ENCODE measurements at regions of chr1 and their contacts with region 1.

Region 1: GRCh38 chr1:182677397-182678098 is 6.8 kb downstream of the RGS8 start:
- DNase-seq: no peak
- H3K4me3 Mint-ChIP-seq: no peak overlapping the region
- H3K27ac Mint-ChIP-seq: no peak overlapping the region
- H3K4me1 Mint-ChIP-seq: no peaks in the 10 kb centered on the region
- H3K27me3 Mint-ChIP-seq: peaks cover 49% of the 10 kb centered on the region
- CTCF ChIP-seq: no peak

Region 2: DNA sequence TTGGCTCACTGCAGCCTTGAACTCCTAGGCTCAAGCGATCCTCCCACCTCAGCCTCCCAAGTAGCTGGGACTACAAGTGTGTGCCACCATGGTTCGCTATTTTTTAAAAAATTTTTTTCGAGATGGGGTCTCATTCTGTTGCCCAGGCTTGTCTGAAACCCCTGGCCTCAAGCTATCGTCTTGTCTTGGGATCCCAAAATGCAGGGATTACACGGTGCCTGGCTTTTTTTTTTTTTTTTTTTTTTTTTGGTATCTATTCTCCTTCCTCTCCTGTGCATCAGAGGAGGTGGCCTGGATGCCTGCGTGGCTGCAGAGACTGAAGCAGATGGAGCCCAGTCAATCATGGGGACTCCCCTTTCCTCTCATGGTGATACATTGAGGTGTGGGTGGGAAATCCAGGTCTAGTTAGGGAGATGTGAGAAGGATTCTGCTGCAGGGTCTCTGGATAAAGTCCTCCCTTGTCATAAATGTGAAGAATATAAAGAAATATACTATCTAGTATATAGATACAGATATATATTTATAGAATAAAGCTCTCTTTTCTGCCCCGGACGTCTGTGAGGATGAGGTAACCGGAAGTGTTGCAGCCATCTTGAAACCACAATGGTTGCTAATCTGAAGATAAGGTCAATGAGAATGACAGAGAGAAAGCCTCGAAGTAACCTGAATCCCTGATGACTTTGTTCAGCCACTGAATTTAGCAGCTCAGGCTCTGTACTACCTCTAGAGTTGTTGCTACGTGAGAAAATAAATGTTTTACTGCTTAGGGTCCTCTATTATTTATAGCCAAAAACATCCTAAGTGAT is 247.1 kb before region 1 on chr1:
- CTCF ChIA-PET with region 1: no interaction called
- intact Hi-C with region 1: no loop called
- DNase-seq: no peak
- H3K4me3 Mint-ChIP-seq: no peak overlapping the region
- H3K27ac Mint-ChIP-seq: no peak overlapping the region
- H3K4me1 Mint-ChIP-seq: peaks cover 10% of the 10 kb centered on the region
- H3K27me3 Mint-ChIP-seq: peaks cover 10% of the 10 kb centered on the region
- CTCF ChIP-seq: no peak

Region 3: GRCh38 chr1:182552527-182552926 is 125.0 kb before region 1 on chr1:
- CTCF ChIA-PET with region 1: no interaction called
- intact Hi-C with region 1: no loop called
- DNase-seq: no peak
- H3K4me3 Mint-ChIP-seq: no peak overlapping the region
- H3K27ac Mint-ChIP-seq: no peak overlapping the region
- H3K4me1 Mint-ChIP-seq: no peaks in the 10 kb centered on the region
- H3K27me3 Mint-ChIP-seq: peaks cover 31% of the 10 kb centered on the region
- CTCF ChIP-seq: no peak

Region 4: GRCh38 chr1:182604169-182605164 is 73.1 kb before region 1 on chr1 and contains the start of gene RGS16:
- CTCF ChIA-PET with region 1: interaction called, 4 read pairs
- intact Hi-C with region 1: loop called (anchors 1 kb)
- DNase-seq: peak; percentile 95
- H3K4me3 Mint-ChIP-seq: peak within 1 kb of the TSS; percentile 77
- H3K27ac Mint-ChIP-seq: no peak within 1 kb of the TSS
- H3K4me1 Mint-ChIP-seq: peaks cover 7% of the 10 kb centered on the region
- H3K27me3 Mint-ChIP-seq: peaks cover 30% of the 10 kb centered on the region
- CTCF ChIP-seq: no peak
- total RNA-seq, gene RGS16: 1.2 and 1.7 TPM in 2 replicates

Region 5: DNA sequence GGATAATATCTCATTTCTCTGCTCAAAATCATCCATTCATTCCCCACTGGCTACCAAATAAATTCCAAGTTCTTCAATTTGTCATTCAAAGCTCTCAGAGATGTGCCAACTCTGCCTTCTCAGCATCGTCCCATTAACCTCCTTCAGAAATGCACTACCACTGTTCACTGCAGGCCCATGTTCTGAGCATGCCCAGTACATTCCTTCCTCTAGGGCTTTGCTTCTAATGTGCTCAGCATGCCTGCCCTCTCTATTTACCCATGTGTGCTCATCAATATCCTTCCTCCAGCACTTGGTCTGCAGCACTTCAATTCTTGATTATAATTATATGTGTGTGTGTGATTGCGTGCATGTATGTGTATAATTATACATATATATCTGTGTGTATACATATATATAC is 42.9 kb after region 1 on chr1:
- CTCF ChIA-PET with region 1: no interaction called
- intact Hi-C with region 1: no loop called
- DNase-seq: peak; percentile 18
- H3K4me3 Mint-ChIP-seq: no peak overlapping the region
- H3K27ac Mint-ChIP-seq: no peak overlapping the region
- H3K4me1 Mint-ChIP-seq: peaks cover 18% of the 10 kb centered on the region
- H3K27me3 Mint-ChIP-seq: no peaks in the 10 kb centered on the region
- CTCF ChIP-seq: peak; percentile 31

Measured in Calu3 (cell line).